GM18951 (cell line): ENCODE measurements at regions of chr1 and their contacts with region 1.

Region 1: GRCh38 chr1:10867138-10867721 is 70.8 kb upstream of the CASZ1 start:
- POLR2A ChIP-seq: no peak

Region 2: DNA sequence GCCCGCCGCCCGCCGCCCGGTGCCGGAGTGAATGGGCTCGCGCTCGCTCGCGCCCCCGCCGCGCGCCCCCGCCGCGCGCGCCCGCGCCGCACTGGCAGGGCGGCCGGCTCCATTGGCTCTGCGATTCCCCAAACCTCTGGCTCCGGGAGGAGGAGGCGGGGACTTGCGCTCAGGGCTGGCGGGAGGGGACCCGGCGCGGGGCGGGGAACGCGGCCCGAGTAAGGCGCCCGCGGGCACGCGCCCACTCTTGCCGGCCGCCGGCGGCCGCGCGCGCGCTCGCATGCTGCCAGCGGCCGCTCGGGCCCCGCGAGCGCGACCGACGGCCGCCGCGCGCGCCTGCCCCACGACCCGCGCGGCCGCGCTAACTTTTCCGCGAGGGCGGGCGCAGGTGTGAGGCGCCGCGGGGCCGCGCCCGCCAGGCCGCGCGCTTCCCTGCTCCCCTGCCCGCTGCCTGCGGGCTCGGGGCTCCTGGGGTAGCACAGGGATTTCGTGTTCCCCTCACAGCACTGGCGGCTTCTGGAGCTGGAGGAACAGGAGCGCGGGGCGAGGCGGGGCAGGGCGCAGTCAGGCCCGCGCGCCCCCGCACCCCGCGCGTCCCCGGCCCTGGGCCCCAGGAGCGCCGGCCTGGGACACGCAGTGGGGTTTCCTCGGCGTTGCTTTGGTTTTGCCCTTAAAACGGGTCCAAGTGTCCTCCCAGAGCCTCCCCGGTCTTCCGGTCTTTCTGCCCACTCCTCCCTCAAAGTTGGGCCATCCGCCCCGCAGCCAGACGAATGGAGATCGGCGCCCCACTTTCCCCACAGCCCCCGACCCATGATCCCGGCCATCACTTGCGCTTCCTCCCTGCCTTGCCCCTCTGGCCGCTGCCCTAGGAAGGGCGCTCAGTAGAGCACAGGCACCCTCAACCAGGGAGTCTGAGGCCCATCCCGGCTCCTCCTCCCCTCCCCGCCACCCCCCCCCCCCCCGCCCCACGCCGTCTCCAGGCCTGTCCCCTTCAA is 172.3 kb before region 1 on chr1:
- in situ Hi-C with region 1: loop called (anchors 10 kb)
- POLR2A ChIP-seq: no peak

Region 3: DNA sequence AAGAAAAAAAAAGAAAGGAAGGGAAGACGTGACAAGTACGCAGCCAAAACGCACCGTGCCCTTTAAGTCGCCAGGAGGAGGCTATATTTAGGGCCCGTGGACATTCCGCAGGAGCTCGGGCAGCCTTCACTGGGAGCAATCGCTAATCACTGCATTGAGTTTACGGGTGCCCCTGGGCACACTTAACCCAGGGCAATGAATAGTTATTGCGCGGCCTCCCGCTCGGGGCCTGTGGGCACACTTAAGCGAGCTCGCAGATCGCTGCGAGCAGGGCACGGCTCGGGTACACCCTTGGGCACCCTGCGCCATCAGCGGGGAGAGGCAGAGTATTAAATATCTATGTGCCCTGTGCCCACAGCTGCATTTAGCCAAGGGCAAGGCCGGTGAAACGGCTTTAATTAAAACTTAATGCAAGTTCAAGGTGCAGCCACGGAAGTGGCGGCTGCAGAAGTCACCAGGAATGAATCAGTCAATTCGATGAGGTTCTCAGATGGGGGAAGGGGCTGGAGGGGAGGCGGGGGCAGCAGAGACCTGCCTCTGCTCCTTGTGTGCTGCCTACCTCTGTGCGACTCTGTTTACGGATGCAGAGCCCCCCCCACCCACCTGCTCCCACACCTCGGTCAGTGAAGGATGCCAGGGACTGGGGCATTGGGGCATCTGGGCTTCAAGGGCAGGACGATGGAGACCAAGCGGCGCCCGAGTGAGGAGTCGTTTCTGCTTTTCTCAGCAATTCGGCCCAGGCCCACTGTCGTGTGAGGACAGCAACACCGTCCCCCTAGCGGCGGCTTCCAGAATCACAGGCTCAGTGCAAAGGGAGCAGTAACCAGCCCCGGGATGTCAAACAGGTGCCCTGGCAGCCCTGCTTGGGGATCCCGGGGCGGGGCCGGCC is 93.4 kb after region 1 on chr1:
- in situ Hi-C with region 1: no loop called
- POLR2A ChIP-seq: no peak

Region 4: GRCh38 chr1:11037740-11038182 is 170.5 kb after region 1 on chr1:
- in situ Hi-C with region 1: no loop called
- POLR2A ChIP-seq: no peak